MCF 10A (cell line): ENCODE measurements at regions of chr1 and their contacts with region 1.

Region 1: GRCh38 chr1:12124693-12125421 is 41.9 kb upstream of the TNFRSF1B start:
- DNase-seq: peak; percentile 74
- H3K4me3 Mint-ChIP-seq: no peak overlapping the region
- H3K27ac Mint-ChIP-seq: no peak overlapping the region
- H3K4me1 Mint-ChIP-seq: no peaks in the 10 kb centered on the region
- H3K27me3 Mint-ChIP-seq: peaks cover 25% of the 10 kb centered on the region
- CTCF ChIP-seq: peak; percentile 93

Region 2: DNA sequence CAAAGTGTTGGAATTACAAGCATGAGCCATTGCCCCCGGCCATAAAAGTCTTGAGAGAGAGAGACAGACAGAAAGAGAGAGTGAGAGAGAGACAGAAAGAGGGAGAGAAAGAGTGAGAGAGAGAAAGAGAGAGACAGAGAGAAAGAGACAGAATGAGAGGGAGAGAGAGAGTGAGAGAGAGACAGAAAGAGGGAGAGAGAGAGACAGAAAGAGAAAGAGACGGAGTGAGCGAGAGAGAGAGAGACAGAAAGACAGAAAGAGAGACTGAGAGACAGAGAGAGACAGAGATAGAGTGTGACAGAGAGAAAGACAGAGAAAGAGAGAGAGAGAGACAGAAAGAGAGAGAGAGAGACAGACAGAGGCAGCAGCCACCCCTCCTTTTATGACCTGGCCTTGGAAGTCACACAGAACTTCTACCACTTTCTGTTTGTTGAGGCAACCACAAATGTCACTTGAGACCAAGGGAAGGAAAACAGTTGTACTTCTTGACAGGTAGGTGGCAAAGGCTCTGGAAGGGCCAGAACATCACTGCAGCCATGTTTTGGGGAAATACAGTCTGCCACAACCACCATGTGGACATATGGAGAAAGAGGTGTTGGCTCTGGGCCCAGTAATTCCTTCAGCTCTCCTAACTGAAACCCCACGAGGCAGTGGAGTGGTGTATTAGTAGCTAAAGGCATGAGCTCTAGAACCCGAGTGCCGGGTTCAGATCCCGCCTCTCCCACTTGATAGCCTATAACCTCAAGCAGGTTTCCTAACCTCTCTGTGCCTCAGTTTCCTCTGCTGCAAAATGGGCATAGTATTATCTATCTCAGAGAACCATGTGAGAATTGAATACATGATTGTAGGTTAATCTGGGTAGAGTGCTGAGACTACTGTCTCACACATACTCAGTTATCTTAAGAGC is 11.2 kb before region 1 on chr1:
- CTCF ChIA-PET with region 1: interaction called, 15 read pairs
- POLR2A ChIA-PET with region 1: interaction called, 3 read pairs
- intact Hi-C with region 1: no loop called
- DNase-seq: peak; percentile 40
- H3K4me3 Mint-ChIP-seq: no peak overlapping the region
- H3K27ac Mint-ChIP-seq: no peak overlapping the region
- H3K4me1 Mint-ChIP-seq: peaks cover 7% of the 10 kb centered on the region
- H3K27me3 Mint-ChIP-seq: peaks cover 24% of the 10 kb centered on the region
- CTCF ChIP-seq: no peak

Region 3: DNA sequence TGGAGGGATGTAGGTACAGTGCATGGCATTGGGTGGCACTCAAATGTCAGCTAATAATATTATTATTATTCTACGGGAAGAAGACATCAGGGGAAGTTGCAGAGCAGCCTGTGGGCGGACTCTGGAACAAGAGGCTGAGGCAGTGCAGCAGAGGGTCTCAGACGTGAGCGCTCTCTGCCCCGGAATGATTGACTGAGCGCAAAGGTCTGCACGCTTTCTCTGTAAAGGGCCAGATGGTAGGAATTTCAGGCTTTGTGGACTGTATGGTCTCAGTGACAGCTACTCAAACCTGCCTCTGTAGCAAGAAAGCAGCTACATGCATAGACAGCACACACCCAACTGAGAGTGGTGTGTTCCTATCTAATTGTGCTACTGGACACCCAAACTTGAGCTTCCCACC is 75.4 kb after region 1 on chr1:
- CTCF ChIA-PET with region 1: interaction called, 316 read pairs
- POLR2A ChIA-PET with region 1: interaction called, 3 read pairs
- intact Hi-C with region 1: no loop called
- DNase-seq: no peak
- H3K4me3 Mint-ChIP-seq: no peak overlapping the region
- H3K27ac Mint-ChIP-seq: no peak overlapping the region
- H3K4me1 Mint-ChIP-seq: no peaks in the 10 kb centered on the region
- H3K27me3 Mint-ChIP-seq: no peaks in the 10 kb centered on the region
- CTCF ChIP-seq: no peak

Region 4: GRCh38 chr1:12208764-12209494 is 84.1 kb after region 1 on chr1:
- CTCF ChIA-PET with region 1: interaction called, 316 read pairs
- POLR2A ChIA-PET with region 1: interaction called, 8 read pairs
- intact Hi-C with region 1: loop called (anchors 1 kb)
- DNase-seq: peak; percentile 86
- H3K4me3 Mint-ChIP-seq: no peak overlapping the region
- H3K27ac Mint-ChIP-seq: no peak overlapping the region
- H3K4me1 Mint-ChIP-seq: no peaks in the 10 kb centered on the region
- H3K27me3 Mint-ChIP-seq: peaks cover 22% of the 10 kb centered on the region
- CTCF ChIP-seq: peak; percentile 91

Region 5: DNA sequence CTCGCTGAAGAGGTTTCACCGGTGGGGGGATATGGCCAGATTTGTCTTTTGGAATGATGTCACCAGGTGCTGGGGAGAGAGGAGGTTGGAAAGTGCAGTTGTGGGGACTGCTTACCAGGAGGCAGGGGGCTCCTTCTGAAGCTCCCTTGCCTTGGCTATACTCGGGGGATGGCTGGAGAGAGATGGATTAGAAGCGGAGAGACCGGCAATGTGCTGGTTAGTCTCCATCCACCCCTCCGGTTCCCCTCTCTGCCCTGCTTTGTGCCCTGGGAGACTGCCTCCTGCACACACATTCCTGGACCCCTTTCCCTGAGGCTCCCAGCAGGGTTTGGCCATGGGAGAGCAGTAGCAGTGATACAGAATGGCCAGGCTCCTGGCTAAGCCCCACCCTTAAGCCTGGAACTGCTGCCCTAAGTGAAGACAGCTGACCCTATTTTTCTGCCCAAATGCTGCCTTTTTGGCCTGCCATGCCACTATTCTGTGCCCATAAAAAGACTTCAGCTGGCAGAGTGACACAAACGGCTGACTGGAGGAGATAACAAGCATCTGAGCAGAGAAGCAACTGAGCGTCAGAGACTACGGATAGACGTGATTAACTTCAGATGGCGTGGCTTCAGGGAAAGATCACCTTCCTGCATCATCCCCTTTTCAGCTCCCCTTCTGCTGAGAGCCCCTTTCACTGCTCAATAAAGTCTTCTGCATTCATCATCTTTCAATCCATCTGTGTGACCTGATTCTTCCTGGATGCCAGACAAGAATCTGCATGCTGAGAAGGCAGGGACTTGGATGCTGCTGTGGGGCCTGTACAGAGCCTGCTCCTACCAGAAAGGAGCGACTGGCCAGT is 90.5 kb after region 1 on chr1:
- CTCF ChIA-PET with region 1: interaction called, 316 read pairs
- POLR2A ChIA-PET with region 1: interaction called, 3 read pairs
- intact Hi-C with region 1: no loop called
- DNase-seq: no peak
- H3K4me3 Mint-ChIP-seq: no peak overlapping the region
- H3K27ac Mint-ChIP-seq: no peak overlapping the region
- H3K4me1 Mint-ChIP-seq: no peaks in the 10 kb centered on the region
- H3K27me3 Mint-ChIP-seq: peaks cover 51% of the 10 kb centered on the region
- CTCF ChIP-seq: no peak

Region 6: GRCh38 chr1:12275369-12275768 is 150.5 kb after region 1 on chr1:
- CTCF ChIA-PET with region 1: interaction called, 3 read pairs
- POLR2A ChIA-PET with region 1: no interaction called
- intact Hi-C with region 1: loop called (anchors 2 kb)
- DNase-seq: peak; percentile 27
- H3K4me3 Mint-ChIP-seq: no peak overlapping the region
- H3K27ac Mint-ChIP-seq: no peak overlapping the region
- H3K4me1 Mint-ChIP-seq: no peaks in the 10 kb centered on the region
- H3K27me3 Mint-ChIP-seq: no peaks in the 10 kb centered on the region
- CTCF ChIP-seq: peak; percentile 34